Mammary epithelial cell (primary cell): ENCODE measurements at regions of chr4 and their contacts with region 1.

Region 1: DNA sequence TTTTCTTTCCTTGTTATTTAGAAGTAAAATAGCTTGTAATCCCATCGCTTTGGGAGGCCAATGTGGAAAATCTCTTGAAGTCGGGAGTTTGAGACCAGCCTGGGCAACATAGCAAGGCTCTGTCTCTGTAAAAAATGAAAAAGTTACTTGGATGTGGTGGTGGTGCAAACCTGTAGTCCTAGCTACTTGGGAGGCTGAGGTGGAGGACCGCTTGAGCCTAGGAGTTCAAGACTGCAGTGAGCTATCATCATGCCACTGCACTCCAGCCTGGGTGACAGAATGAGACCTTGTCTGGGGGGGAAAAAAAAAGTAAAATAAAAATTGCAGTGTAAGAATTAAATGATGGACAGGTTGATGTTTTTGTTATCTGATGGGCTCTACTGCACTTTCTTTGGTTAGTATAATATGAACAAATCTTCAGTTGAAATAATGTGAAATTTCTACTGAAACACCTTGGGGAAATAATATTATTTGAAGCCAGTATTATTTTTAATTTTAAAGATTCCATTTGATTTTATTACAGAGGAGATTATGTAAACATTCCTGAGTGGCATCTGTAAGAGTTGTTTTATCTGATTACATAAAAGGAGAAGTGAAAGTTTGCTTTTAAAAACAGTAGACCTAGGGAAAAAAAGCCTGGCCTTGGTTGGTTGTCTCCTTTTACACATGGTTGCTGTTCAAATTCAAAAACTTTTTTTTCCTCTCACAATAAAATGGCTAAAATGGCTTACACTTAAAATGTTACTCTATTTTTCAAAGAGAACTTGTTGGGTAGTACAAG is 10.5 kb upstream of the NDUFC1 start:
- DNase-seq: no peak
- H3K4me3 ChIP-seq: no peak overlapping the region
- H3K27ac ChIP-seq: no peak overlapping the region
- H3K4me1 ChIP-seq: no peaks in the 10 kb centered on the region
- H3K27me3 ChIP-seq: no peaks in the 10 kb centered on the region
- CTCF ChIP-seq: no peak

Region 2: GRCh38 chr4:139386421-139386820 is 73.7 kb after region 1 on chr4:
- CTCF ChIA-PET with region 1: no interaction called
- dilution Hi-C with region 1: loop called (anchors 5 kb)
- in situ Hi-C with region 1: no loop called
- intact Hi-C with region 1: no loop called
- DNase-seq: no peak
- H3K4me3 ChIP-seq: no peak overlapping the region
- H3K27ac ChIP-seq: no peak overlapping the region
- H3K4me1 ChIP-seq: no peaks in the 10 kb centered on the region
- H3K27me3 ChIP-seq: no peaks in the 10 kb centered on the region
- CTCF ChIP-seq: no peak